Left cardiac atrium (tissue), 4 donors: ENCODE measurements at regions of chrX and their contacts with region 1.

Region 1: GRCh38 chrX:119565107-119565663 is at the start of gene STEEP1:
- DNase-seq: peak; percentile 91
- ATAC-seq: peak; percentile 98 to 99
- total RNA-seq, gene STEEP1: 13.1 to 17.8 TPM

Region 2: DNA sequence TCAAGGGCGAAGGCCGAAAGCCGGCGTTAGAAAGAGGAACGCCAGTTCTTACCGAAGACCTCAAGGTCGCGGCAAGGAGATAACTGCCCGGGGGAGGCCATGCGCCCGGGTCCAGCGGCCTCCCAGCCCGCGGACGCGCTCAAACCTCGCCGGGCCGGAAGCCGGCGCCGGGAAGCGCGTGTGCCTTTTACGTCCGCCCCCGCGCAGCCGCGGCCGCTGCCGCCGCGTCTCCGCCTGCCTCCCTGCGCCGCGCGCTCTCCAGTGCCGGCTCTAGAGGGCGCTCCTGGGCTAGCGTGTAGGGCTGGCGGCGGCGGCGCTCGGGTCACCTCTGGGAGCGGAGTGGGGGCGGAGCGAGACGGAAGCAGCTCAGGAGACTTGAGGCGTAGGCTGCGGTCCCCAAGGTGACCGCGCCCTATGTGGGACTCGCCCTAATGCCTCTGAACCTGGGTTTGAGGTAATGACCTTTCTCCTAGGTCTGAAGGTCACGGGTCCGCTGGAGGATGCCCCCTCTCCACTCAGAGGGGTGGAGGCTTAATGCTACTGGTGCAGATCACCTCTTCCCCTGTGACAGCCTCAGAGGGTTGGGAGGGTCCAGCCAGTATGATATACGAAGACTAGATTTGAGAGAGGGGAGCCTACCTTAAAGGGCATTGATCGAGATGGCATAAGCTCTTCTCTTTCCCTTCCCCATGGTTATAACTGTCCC is 96.1 kb before region 1 on chrX:
- intact Hi-C with region 1: loop called in 1 of 2 experiments (anchors 10 kb)
- DNase-seq: peak; percentile 90
- ATAC-seq: peak; percentile 86 to 93